AG04450 (cell line): ENCODE measurements at regions of chr2 and their contacts with region 1.

Region 1: GRCh38 chr2:171141320-171141719 is 19.4 kb downstream of the TLK1 start:
- DNase-seq: no peak
- H3K4me3 ChIP-seq: no peak overlapping the region
- H3K27ac ChIP-seq: no peak overlapping the region
- H3K27me3 ChIP-seq: no peaks in the 10 kb centered on the region
- CTCF ChIP-seq: no peak

Region 2: GRCh38 chr2:171009386-171009785 is 131.9 kb before region 1 on chr2:
- CTCF ChIA-PET with region 1: no interaction called
- POLR2A ChIA-PET with region 1: interaction called, 11 read pairs
- DNase-seq: no peak
- H3K4me3 ChIP-seq: no peak overlapping the region
- H3K27ac ChIP-seq: no peak overlapping the region
- H3K27me3 ChIP-seq: no peaks in the 10 kb centered on the region
- CTCF ChIP-seq: no peak

Region 3: GRCh38 chr2:171109571-171109970 is 31.7 kb before region 1 on chr2:
- CTCF ChIA-PET with region 1: no interaction called
- POLR2A ChIA-PET with region 1: no interaction called
- DNase-seq: no peak
- H3K4me3 ChIP-seq: no peak overlapping the region
- H3K27ac ChIP-seq: no peak overlapping the region
- H3K27me3 ChIP-seq: no peaks in the 10 kb centered on the region
- CTCF ChIP-seq: no peak

Region 4: DNA sequence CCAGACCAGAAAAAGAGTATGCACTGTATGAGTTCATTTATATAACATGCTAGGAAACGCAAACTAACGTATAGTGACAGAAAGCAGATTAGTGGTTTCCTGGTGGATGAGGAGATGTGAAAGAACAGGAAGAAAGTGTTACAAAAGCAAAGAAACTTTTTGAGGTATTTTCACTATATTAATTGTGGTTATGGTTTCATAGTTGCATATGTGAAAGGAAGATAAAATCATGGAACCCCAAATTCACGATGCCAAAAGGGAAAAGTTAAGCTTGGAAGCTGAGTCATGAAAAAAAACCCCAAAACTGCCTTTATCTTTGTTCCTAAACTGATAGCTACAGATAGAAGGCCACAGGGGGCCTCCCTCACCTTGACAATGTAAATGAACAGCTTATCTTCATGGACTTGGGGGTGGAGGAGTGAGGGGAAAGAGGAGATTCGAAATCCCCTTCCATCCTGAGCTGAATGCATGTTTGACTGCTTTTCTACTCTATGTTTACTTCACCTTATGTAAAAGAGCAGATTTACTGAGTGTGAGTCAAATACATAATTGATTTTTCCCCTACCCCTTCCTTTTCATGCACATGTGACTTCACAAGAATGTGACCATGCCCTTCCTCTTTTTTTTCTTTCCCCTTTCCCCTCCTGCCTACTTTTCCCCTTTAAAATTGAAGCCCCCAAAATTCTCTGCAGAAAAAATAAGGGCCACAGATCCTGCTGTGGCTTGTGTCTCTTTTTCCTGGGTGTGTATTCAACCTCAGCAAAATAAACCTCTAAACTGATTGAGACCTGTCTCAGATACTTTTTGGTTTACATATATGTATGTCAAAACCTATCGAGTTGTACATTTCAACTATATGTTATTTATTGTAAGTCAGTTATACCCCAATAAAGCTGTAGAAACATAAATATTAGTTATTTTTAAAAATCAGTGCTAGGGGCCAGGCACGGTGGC is 119.4 kb after region 1 on chr2:
- CTCF ChIA-PET with region 1: no interaction called
- POLR2A ChIA-PET with region 1: no interaction called
- DNase-seq: no peak
- H3K4me3 ChIP-seq: no peak overlapping the region
- H3K27ac ChIP-seq: no peak overlapping the region
- H3K27me3 ChIP-seq: no peaks in the 10 kb centered on the region
- CTCF ChIP-seq: no peak